ENCODE measurements at regions of chr4 and their contacts with region 1.

Region 1: GRCh38 chr4:55965585-55965984 is 16.8 kb downstream of the CEP135 start:
- DNase-seq: no peak
- CTCF ChIP-seq: no peak

Region 2: GRCh38 chr4:55980725-55981124 is 15.1 kb after region 1 on chr4:
- CTCF ChIA-PET with region 1: interaction called, 17 read pairs
- POLR2A ChIA-PET with region 1: no interaction called
- DNase-seq: no peak
- CTCF ChIP-seq: no peak

Measured in GM10248 (cell line).